ENCODE measurements at regions of chr13 and their contacts with region 1.

Region 1: GRCh38 chr13:20489185-20489820 is 36.4 kb downstream of the CRYL1 start:
- DNase-seq: peak; percentile 53 to 61
- H3K4me3 ChIP-seq: no peak overlapping the region
- H3K27ac ChIP-seq: no peak overlapping the region
- H3K4me1 ChIP-seq: no peaks in the 10 kb centered on the region
- H3K27me3 ChIP-seq: no peaks in the 10 kb centered on the region
- CTCF ChIP-seq: peak; percentile 90

Region 2: GRCh38 chr13:20160847-20161274 is 328.4 kb before region 1 on chr13 and contains the start of gene GJA3:
- CTCF ChIA-PET with region 1: no interaction called
- POLR2A ChIA-PET with region 1: no interaction called
- intact Hi-C with region 1: no loop called
- DNase-seq: peak in 1 of 2 experiments; percentile 5
- H3K4me3 ChIP-seq: peak within 1 kb of the TSS; percentile 47
- H3K27ac ChIP-seq: no peak within 1 kb of the TSS
- H3K4me1 ChIP-seq: peaks cover 4% of the 10 kb centered on the region; the same call in 1 of the 2 replicates
- H3K27me3 ChIP-seq: peaks cover 10% of the 10 kb centered on the region; the same call in 1 of the 2 replicates
- CTCF ChIP-seq: no peak
- total RNA-seq, gene GJA3: 0.15 TPM in 1 of 2 replicates, not detected in the other

Region 3: GRCh38 chr13:20182231-20182846 is 307.0 kb before region 1 on chr13:
- CTCF ChIA-PET with region 1: interaction called, 7 read pairs
- POLR2A ChIA-PET with region 1: no interaction called
- intact Hi-C with region 1: loop called (anchors 1 kb)
- DNase-seq: peak; percentile 17 to 59
- H3K4me3 ChIP-seq: no peak overlapping the region
- H3K27ac ChIP-seq: no peak overlapping the region
- H3K4me1 ChIP-seq: no peaks in the 10 kb centered on the region
- H3K27me3 ChIP-seq: no peaks in the 10 kb centered on the region
- CTCF ChIP-seq: peak; percentile 89

Region 4: GRCh38 chr13:20411638-20412360 is 77.5 kb before region 1 on chr13:
- CTCF ChIA-PET with region 1: no interaction called
- POLR2A ChIA-PET with region 1: no interaction called
- intact Hi-C with region 1: loop called (anchors 10 kb)
- DNase-seq: no peak
- H3K4me3 ChIP-seq: no peak overlapping the region
- H3K27ac ChIP-seq: no peak overlapping the region
- H3K4me1 ChIP-seq: peaks cover 10% of the 10 kb centered on the region
- H3K27me3 ChIP-seq: no peaks in the 10 kb centered on the region
- CTCF ChIP-seq: no peak

Measured in PC-9 (cell line).